ENCODE measurements at regions of chr20 and their contacts with region 1.

Region 1: GRCh38 chr20:49534255-49534712 is 33.7 kb downstream of the PTGIS start:
- DNase-seq: no peak
- H3K4me3 ChIP-seq: no peak overlapping the region
- H3K27ac ChIP-seq: no peak overlapping the region
- H3K4me1 ChIP-seq: no peaks in the 10 kb centered on the region
- H3K27me3 ChIP-seq: no peaks in the 10 kb centered on the region
- CTCF ChIP-seq: peak; percentile 62 to 85 (median 79)
- EP300 ChIP-seq: no peak
- POLR2A ChIP-seq: no peak

Region 2: GRCh38 chr20:49245921-49246740 is 288.2 kb before region 1 on chr20:
- intact Hi-C with region 1: loop called (anchors 5 kb)
- DNase-seq: no peak
- H3K4me3 ChIP-seq: no peak overlapping the region
- H3K27ac ChIP-seq: peak overlapping the region; percentile 18 to 69 (median 25)
- H3K4me1 ChIP-seq: peaks cover 0 to 15% (median 10%) of the 10 kb centered on the region in 4 donors
- H3K27me3 ChIP-seq: no peaks in the 10 kb centered on the region
- CTCF ChIP-seq: peak in 3 of 4 experiments; percentile 44 to 61 (median 59)
- EP300 ChIP-seq: no peak
- POLR2A ChIP-seq: no peak

Region 3: GRCh38 chr20:49338061-49338460 is 196.2 kb before region 1 on chr20:
- intact Hi-C with region 1: loop called (anchors 1 kb)
- DNase-seq: no peak
- H3K4me3 ChIP-seq: no peak overlapping the region
- H3K27ac ChIP-seq: no peak overlapping the region
- H3K4me1 ChIP-seq: peaks cover 0 to 18% (median 11%) of the 10 kb centered on the region in 4 donors
- H3K27me3 ChIP-seq: no peaks in the 10 kb centered on the region
- CTCF ChIP-seq: no peak
- EP300 ChIP-seq: no peak
- POLR2A ChIP-seq: no peak

Measured in sigmoid colon (tissue), 7 donors.